ENCODE measurements at regions of chr3 and their contacts with region 1.

Region 1: GRCh38 chr3:24886501-24886900 is 391.9 kb upstream of the THRB start:
- DNase-seq: no peak
- ATAC-seq: no peak
- H3K4me3 ChIP-seq: no peak overlapping the region
- H3K4me3 Mint-ChIP-seq: no peak overlapping the region
- H3K27ac ChIP-seq: no peak overlapping the region
- H3K27ac Mint-ChIP-seq: no peak overlapping the region
- H3K4me1 ChIP-seq: no peaks in the 10 kb centered on the region
- H3K4me1 Mint-ChIP-seq: no peaks in the 10 kb centered on the region
- H3K27me3 ChIP-seq: no peaks in the 10 kb centered on the region
- H3K27me3 Mint-ChIP-seq: no peaks in the 10 kb centered on the region
- CTCF ChIP-seq: no peak

Region 2: GRCh38 chr3:24288496-24289236 is 597.8 kb before region 1 on chr3:
- CTCF ChIA-PET with region 1: no interaction called
- POLR2A ChIA-PET with region 1: no interaction called
- intact Hi-C with region 1: no loop called
- DNase-seq: no peak
- ATAC-seq: no peak
- H3K4me3 ChIP-seq: no peak overlapping the region
- H3K4me3 Mint-ChIP-seq: no peak overlapping the region
- H3K27ac ChIP-seq: no peak overlapping the region
- H3K27ac Mint-ChIP-seq: no peak overlapping the region
- H3K4me1 ChIP-seq: no peaks in the 10 kb centered on the region
- H3K4me1 Mint-ChIP-seq: no peaks in the 10 kb centered on the region
- H3K27me3 ChIP-seq: no peaks in the 10 kb centered on the region
- H3K27me3 Mint-ChIP-seq: no peaks in the 10 kb centered on the region
- CTCF ChIP-seq: no peak

Region 3: DNA sequence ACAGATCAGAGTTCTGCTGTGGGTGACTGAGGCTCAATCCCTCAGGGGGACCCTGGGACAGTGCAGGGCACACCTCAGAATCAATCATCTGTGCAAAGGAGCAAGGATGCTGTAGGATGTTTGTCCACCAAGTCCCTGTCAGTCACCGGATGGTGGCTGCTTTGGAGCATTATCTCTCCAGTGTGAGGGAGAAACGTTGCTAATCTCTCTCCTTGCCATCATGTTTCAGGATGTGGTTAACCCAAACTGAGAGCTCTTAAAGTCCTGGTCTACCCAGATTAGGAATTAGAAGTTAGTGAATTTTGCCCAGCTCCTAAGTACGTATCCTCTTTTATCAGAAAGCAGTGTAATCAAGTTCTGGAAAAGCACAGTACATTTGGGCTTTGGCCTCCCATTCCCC is 1709.8 kb after region 1 on chr3:
- CTCF ChIA-PET with region 1: no interaction called
- POLR2A ChIA-PET with region 1: no interaction called
- intact Hi-C with region 1: loop called in 1 of 2 experiments (anchors 5 kb)
- DNase-seq: no peak
- ATAC-seq: no peak
- H3K4me3 ChIP-seq: no peak overlapping the region
- H3K4me3 Mint-ChIP-seq: no peak overlapping the region
- H3K27ac ChIP-seq: no peak overlapping the region
- H3K27ac Mint-ChIP-seq: no peak overlapping the region
- H3K4me1 ChIP-seq: no peaks in the 10 kb centered on the region
- H3K4me1 Mint-ChIP-seq: no peaks in the 10 kb centered on the region
- H3K27me3 ChIP-seq: no peaks in the 10 kb centered on the region
- H3K27me3 Mint-ChIP-seq: no peaks in the 10 kb centered on the region
- CTCF ChIP-seq: no peak